AG04449 (cell line): ENCODE measurements at regions of chr4 and their contacts with region 1.

Region 1: GRCh38 chr4:177250056-177250696 is 59.5 kb upstream of the NEIL3 start:
- DNase-seq: no peak
- H3K4me3 ChIP-seq: no peak overlapping the region
- CTCF ChIP-seq: peak; percentile 99

Region 2: GRCh38 chr4:177214935-177215334 is 35.2 kb before region 1 on chr4:
- CTCF ChIA-PET with region 1: no interaction called
- POLR2A ChIA-PET with region 1: no interaction called
- DNase-seq: no peak
- H3K4me3 ChIP-seq: no peak overlapping the region
- CTCF ChIP-seq: no peak

Region 3: DNA sequence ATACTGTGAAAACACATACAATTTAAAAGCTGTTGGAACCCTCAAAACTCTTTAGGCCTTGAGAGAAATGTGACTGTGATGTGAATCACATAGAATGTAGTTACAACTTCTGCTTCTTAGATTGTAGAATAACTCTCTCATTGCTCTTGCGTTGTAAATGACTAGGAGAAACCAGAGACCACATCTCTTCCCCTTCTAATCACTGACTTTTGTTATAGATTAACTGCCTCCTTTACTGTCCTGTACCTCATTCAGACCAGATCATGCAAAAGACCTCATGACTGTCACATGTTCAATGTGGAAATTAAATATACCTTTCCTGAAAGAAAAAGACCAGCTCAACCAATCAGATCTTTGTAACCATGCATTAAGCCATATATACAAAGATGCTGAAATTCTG is 16.3 kb after region 1 on chr4:
- CTCF ChIA-PET with region 1: interaction called, 23 read pairs
- POLR2A ChIA-PET with region 1: no interaction called
- DNase-seq: no peak
- H3K4me3 ChIP-seq: no peak overlapping the region
- CTCF ChIP-seq: no peak

Region 4: DNA sequence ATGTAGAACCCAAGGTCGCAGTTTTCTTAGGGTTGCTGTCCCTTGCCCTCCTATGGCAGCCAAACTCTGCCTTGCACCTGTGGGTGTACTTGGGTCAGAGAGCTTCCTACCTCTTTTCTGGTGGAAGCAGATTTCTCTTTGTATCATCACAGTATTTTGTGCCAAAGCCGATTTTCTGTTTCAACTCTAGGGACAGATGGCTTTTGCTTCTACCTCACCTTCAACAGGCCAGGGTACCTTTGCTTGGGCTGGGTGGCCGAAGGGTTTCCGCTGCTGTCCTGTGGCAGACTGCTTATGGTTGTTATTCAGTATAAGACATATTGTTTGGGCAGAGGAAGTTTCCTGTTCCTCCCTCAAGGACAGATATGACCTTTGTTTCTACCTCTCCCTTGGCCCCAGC is 81.9 kb after region 1 on chr4:
- CTCF ChIA-PET with region 1: interaction called, 83 read pairs
- POLR2A ChIA-PET with region 1: no interaction called
- DNase-seq: no peak
- H3K4me3 ChIP-seq: no peak overlapping the region
- CTCF ChIP-seq: no peak